HCT116 (cell line): ENCODE measurements at regions of chr7 and their contacts with region 1.

Region 1: DNA sequence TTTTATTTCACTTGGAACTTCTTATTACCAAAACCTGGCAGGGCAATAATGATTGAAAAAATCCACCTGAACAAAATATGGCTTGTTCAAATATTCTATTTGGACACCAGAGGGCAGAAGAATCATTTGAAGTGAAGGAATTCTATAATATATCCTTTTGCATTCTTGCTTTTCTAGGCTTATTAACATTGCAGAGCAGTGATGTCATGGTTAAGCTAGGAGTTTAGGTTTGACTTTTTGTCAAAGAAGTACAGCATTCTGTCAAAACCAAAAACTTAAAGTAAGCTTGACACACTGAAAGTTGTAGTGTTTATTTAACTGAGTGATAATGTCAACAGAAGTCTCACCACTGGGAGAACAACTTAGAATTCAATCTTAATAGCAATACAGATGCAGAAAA is 156.0 kb downstream of the SEMA3D start:
- DNase-seq: peak; percentile 26
- ATAC-seq: peak; percentile 67
- H3K4me3 ChIP-seq: no peak overlapping the region
- H3K27ac ChIP-seq: no peak overlapping the region
- H3K4me1 ChIP-seq: no peaks in the 10 kb centered on the region
- H3K27me3 ChIP-seq: no peaks in the 10 kb centered on the region
- CTCF ChIP-seq: peak; percentile 25 to 68 (median 56); a peak in 4 of 6 replicates
- POLR2A ChIP-seq: no peak
- RAD21 ChIP-seq: peak; percentile 66

Region 2: GRCh38 chr7:84237533-84238173 is 793.2 kb before region 1 on chr7:
- CTCF ChIA-PET with region 1: no interaction called
- POLR2A ChIA-PET with region 1: no interaction called
- RAD21 ChIA-PET with region 1: no interaction called
- intact Hi-C with region 1: no loop called
- DNase-seq: peak; percentile 69
- ATAC-seq: peak; percentile 68
- H3K4me3 ChIP-seq: no peak overlapping the region
- H3K27ac ChIP-seq: no peak overlapping the region
- H3K4me1 ChIP-seq: peaks cover 0 to 27% of the 10 kb centered on the region in 2 experiments; a peak in 2 of 4 replicates
- H3K27me3 ChIP-seq: no peaks in the 10 kb centered on the region
- CTCF ChIP-seq: no peak
- POLR2A ChIP-seq: no peak
- RAD21 ChIP-seq: no peak; the same call in 1 of the 2 replicates

Region 3: GRCh38 chr7:84568781-84569180 is 462.1 kb before region 1 on chr7:
- CTCF ChIA-PET with region 1: no interaction called
- POLR2A ChIA-PET with region 1: no interaction called
- RAD21 ChIA-PET with region 1: no interaction called
- intact Hi-C with region 1: no loop called
- DNase-seq: no peak
- ATAC-seq: no peak
- H3K4me3 ChIP-seq: no peak overlapping the region
- H3K27ac ChIP-seq: no peak overlapping the region
- H3K4me1 ChIP-seq: no peaks in the 10 kb centered on the region
- H3K27me3 ChIP-seq: no peaks in the 10 kb centered on the region
- CTCF ChIP-seq: no peak
- POLR2A ChIP-seq: no peak
- RAD21 ChIP-seq: no peak

Region 4: DNA sequence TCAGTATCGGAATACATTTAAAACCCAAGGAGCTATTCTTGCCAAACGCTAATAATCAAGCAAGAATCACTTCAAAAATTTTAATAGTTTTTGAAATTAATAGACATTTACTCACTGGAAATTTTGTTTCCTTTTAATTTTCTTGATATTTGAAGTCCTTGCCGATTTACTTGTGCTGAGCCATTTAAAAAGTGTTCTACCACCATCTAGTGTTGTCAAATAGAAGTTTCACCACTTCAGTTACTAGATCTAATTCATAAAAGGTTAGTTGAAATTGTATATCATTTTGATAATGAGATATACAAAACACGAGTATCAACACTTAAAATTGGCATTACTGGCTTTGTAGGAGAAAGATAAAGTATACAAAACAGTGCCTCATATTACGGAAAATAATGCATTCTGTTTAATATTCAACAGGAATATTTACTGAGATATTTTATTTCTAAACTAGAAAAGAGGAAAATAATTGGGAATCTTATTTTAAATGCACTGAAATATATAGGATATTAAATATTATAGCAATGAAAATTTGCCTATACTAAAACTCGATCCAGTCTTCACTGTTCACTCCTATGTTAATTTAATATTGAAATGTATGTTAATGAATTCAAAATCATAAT is 820.8 kb after region 1 on chr7:
- CTCF ChIA-PET with region 1: interaction called, 13 read pairs
- POLR2A ChIA-PET with region 1: no interaction called
- RAD21 ChIA-PET with region 1: interaction called in 1 of 2 experiments, 3 read pairs
- intact Hi-C with region 1: loop called (anchors 1 kb)
- DNase-seq: peak; percentile 34
- ATAC-seq: no peak
- H3K4me3 ChIP-seq: no peak overlapping the region
- H3K27ac ChIP-seq: no peak overlapping the region
- H3K4me1 ChIP-seq: no peaks in the 10 kb centered on the region
- H3K27me3 ChIP-seq: no peaks in the 10 kb centered on the region
- CTCF ChIP-seq: peak; percentile 36 to 63 (median 39); a peak in 5 of 6 replicates
- POLR2A ChIP-seq: no peak
- RAD21 ChIP-seq: peak; percentile 64

Region 5: DNA sequence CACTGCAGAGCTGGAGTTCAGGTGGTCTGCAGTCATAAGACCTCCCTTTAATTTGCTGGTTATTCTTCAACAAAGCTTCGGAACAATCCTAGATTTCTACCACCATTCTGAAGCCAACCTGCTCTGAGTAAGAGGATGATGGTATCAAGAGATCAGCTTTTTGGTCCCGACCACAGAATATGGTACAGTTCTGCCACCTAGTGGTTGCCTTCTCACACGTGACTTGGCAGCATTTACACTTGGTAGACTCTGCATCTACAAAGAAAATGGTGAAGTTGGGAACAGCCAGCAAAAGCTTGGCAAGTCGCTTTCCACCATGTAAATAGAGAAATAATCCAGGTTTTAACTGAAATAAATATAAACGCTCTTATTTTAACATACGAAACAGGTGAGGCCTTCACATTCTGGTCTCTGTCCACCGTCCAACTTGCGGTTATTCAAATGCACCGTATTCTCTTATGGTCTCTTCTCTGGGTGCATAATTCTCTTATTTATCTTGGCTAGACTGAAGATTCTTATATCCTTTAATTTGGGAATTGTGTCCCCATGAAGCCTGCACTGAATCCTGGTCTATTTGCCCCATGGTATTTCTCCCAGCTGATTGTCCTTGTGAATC is 1438.9 kb after region 1 on chr7:
- CTCF ChIA-PET with region 1: no interaction called
- POLR2A ChIA-PET with region 1: no interaction called
- RAD21 ChIA-PET with region 1: no interaction called
- intact Hi-C with region 1: loop called (anchors 5 kb)
- DNase-seq: peak; percentile 78
- ATAC-seq: peak; percentile 94
- H3K4me3 ChIP-seq: no peak overlapping the region
- H3K27ac ChIP-seq: no peak overlapping the region
- H3K4me1 ChIP-seq: no peaks in the 10 kb centered on the region
- H3K27me3 ChIP-seq: no peaks in the 10 kb centered on the region
- CTCF ChIP-seq: peak; percentile 47 to 82 (median 70); a peak in 5 of 6 replicates
- POLR2A ChIP-seq: no peak
- RAD21 ChIP-seq: peak; percentile 85